Mammary epithelial cell (primary cell): ENCODE measurements at regions of chr17 and their contacts with region 1.

Region 1: GRCh38 chr17:3535253-3535995 is 22.2 kb downstream of the TRPV3 start:
- DNase-seq: peak; percentile 34
- H3K4me3 ChIP-seq: peak overlapping the region in 1 of 3 experiments; percentile 39
- H3K27ac ChIP-seq: no peak overlapping the region
- H3K4me1 ChIP-seq: no peaks in the 10 kb centered on the region
- H3K27me3 ChIP-seq: no peaks in the 10 kb centered on the region
- CTCF ChIP-seq: peak; percentile 41 to 68

Region 2: DNA sequence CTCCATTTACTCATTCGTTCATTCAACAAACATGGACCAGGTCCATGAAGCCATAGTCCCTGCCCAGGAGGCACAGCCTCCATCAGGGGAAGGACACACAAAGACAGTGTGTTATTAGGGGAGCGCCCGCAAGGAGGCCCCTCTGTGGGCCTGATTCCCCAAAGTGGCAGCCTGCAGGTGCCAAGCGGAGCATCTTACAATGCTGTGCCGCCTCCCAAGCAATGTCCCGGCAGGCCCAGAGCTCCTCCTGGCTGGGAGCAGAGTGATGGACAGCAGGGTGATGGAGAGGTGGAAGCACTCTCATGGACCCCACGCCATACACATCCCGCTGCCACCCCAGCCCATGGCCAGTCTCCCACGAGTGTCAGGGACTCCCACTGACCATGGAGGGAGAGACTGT is 48.0 kb after region 1 on chr17:
- CTCF ChIA-PET with region 1: interaction called, 15 read pairs
- dilution Hi-C with region 1: no loop called
- in situ Hi-C with region 1: no loop called
- intact Hi-C with region 1: no loop called
- DNase-seq: no peak
- H3K4me3 ChIP-seq: no peak overlapping the region
- H3K27ac ChIP-seq: no peak overlapping the region
- H3K4me1 ChIP-seq: no peaks in the 10 kb centered on the region
- H3K27me3 ChIP-seq: no peaks in the 10 kb centered on the region
- CTCF ChIP-seq: no peak

Region 3: DNA sequence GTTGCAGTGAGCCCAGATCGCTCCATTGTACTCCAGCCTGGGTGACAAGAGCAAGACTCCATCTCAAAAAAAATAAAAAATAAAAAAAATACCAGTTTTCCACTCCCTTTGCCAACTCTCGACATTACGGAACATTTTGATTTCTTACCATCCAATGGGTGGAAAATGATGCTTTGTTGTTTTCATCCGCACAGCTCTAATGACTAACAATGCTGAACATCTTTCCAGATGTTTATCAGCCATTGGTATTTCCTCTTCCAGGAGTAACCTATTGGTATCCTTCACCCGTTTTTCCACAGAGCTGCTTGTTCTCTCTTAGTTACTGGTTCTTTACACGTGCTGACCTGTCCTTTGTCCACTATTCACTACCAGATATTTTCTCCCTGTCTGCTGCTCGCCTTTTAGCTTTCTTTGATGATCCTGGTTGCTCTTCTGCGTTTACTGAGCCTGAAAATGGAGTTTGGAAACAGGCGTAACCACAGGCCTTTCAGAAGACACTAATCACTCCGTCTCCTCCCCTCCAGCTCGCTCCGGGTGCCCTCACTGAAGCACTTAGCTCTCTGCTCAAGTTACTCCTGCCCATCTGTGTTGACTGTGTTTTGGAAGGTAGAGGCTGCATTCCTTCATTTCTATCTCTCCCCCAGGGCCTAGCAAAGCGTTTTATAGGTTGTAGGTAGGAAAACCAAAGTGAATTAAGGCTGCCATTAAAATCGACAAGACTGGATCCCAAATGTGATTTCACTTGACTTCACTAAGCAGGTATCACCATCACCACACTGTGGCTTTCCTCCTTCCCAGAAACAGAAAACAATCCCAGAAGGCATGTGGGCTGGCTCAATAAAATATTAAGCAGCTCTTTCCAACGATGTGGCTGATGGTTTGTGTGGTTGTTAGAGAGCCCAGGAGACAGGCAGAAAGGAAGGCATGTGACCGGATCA is 91.7 kb after region 1 on chr17:
- CTCF ChIA-PET with region 1: no interaction called
- dilution Hi-C with region 1: loop called (anchors 10 kb)
- in situ Hi-C with region 1: no loop called
- intact Hi-C with region 1: no loop called
- DNase-seq: peak; percentile 15
- H3K4me3 ChIP-seq: no peak overlapping the region
- H3K27ac ChIP-seq: no peak overlapping the region
- H3K4me1 ChIP-seq: no peaks in the 10 kb centered on the region
- H3K27me3 ChIP-seq: no peaks in the 10 kb centered on the region
- CTCF ChIP-seq: no peak

Region 4: GRCh38 chr17:3704931-3705717 is 169.7 kb after region 1 on chr17:
- CTCF ChIA-PET with region 1: no interaction called
- dilution Hi-C with region 1: loop called (anchors 5 kb)
- in situ Hi-C with region 1: no loop called
- intact Hi-C with region 1: no loop called
- DNase-seq: no peak
- H3K4me3 ChIP-seq: no peak overlapping the region
- H3K27ac ChIP-seq: no peak overlapping the region
- H3K4me1 ChIP-seq: no peaks in the 10 kb centered on the region
- H3K27me3 ChIP-seq: no peaks in the 10 kb centered on the region
- CTCF ChIP-seq: no peak